ENCODE measurements at regions of chr17 and their contacts with region 1.

Region 1: GRCh38 chr17:6853764-6854442 is 22.4 kb upstream of the TEKT1 start:
- DNase-seq: peak; percentile 79
- H3K4me3 ChIP-seq: peak overlapping the region; percentile 58 to 59 (median 59)
- H3K27ac ChIP-seq: peak overlapping the region; percentile 94
- H3K4me1 ChIP-seq: peaks cover 14% of the 10 kb centered on the region
- H3K27me3 ChIP-seq: no peaks in the 10 kb centered on the region
- CTCF ChIP-seq: peak; percentile 55 to 72

Region 2: GRCh38 chr17:6753006-6753445 is 100.9 kb before region 1 on chr17:
- CTCF ChIA-PET with region 1: interaction called, 12 read pairs
- dilution Hi-C with region 1: no loop called
- in situ Hi-C with region 1: no loop called
- intact Hi-C with region 1: no loop called
- DNase-seq: peak; percentile 66
- H3K4me3 ChIP-seq: no peak overlapping the region
- H3K27ac ChIP-seq: peak overlapping the region; percentile 92
- H3K4me1 ChIP-seq: peaks cover 24% of the 10 kb centered on the region
- H3K27me3 ChIP-seq: no peaks in the 10 kb centered on the region
- CTCF ChIP-seq: no peak

Region 3: DNA sequence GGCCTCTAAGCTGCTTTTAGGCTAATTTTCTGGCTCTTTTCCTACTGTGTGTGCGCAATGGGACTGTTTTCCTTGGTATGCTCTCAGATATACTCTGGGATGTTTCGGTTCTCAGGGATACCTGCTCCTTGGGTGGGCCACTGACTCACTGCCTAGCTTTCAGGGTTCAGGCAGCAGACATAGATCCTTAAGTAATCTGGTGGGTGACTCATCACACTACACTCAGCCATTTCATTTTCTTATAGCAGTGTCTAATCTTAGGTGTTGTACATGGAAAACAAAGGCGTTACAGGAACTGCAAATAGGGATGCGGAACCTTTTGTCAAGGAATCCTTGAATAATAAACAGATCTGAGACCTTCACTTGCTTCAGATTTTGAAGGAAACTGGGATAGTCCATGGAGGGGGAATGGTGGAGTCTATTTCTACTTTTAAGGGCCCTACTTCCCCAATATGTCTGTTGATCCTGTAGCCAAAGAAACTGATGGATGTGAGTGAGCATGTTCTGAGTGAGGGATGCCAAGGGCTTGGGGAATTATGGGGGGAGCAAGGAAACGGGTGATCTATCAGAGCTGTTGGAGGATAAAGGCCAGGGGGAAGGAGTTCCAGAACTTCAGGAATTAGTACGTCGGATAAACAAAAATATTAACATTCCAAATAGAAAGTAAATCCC is 18.4 kb after region 1 on chr17:
- CTCF ChIA-PET with region 1: interaction called, 3 read pairs
- dilution Hi-C with region 1: no loop called
- in situ Hi-C with region 1: no loop called
- intact Hi-C with region 1: loop called (anchors 1 kb)
- DNase-seq: peak; percentile 99
- H3K4me3 ChIP-seq: no peak overlapping the region
- H3K27ac ChIP-seq: peak overlapping the region; percentile 72
- H3K4me1 ChIP-seq: peaks cover 55% of the 10 kb centered on the region
- H3K27me3 ChIP-seq: no peaks in the 10 kb centered on the region
- CTCF ChIP-seq: no peak

Region 4: GRCh38 chr17:6908807-6909206 is 54.9 kb after region 1 on chr17:
- CTCF ChIA-PET with region 1: interaction called, 5 read pairs
- dilution Hi-C with region 1: no loop called
- in situ Hi-C with region 1: no loop called
- intact Hi-C with region 1: loop called (anchors 2 kb)
- DNase-seq: no peak
- H3K4me3 ChIP-seq: no peak overlapping the region
- H3K27ac ChIP-seq: no peak overlapping the region
- H3K4me1 ChIP-seq: no peaks in the 10 kb centered on the region
- H3K27me3 ChIP-seq: no peaks in the 10 kb centered on the region
- CTCF ChIP-seq: no peak

Measured in mammary epithelial cell (primary cell).